ENCODE measurements at regions of chr10 and their contacts with region 1.

Region 1: DNA sequence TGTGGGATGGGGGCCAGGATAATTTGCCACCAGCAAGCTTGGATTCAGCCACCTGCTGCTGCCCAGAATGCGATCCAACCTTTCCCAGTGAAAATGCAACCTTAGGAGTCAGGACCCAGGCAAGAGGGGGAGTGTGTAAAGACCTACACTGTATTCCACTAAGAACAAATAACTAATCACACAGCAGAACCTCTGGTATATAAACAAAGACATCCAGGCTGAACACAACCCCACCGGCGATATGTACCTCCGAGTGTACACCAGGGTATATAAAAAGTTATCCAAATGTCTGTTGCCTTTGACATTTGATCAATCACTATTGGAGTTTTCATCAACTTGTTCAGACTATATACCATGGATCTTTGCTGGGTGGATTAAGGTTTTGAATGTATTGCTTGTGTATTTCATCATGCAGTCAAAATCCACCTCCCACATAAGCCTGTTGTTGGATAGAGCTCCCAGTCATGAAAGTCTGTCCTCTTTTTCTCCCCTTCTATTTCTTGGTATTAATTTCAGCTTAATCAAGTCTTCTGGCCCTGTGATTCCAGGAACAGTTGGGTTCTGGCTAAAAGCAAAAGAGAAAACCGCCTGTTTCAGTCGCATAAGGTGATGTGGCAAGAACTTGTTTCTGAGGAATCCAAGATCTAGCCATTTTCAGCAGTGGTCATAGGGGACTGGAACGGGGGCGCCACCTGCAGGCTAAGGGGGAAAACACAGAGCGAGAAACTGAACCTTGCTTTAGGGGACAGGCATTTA is 290.7 kb downstream of the CCDC3 start:
- DNase-seq: peak; percentile 74
- H3K4me3 Mint-ChIP-seq: no peak overlapping the region
- H3K27ac Mint-ChIP-seq: peak overlapping the region; percentile 76
- H3K4me1 Mint-ChIP-seq: peaks cover 65% of the 10 kb centered on the region
- H3K27me3 Mint-ChIP-seq: no peaks in the 10 kb centered on the region

Region 2: GRCh38 chr10:11993834-11994468 is 716.8 kb before region 1 on chr10:
- intact Hi-C with region 1: no loop called
- DNase-seq: no peak
- H3K4me3 Mint-ChIP-seq: no peak overlapping the region
- H3K27ac Mint-ChIP-seq: no peak overlapping the region
- H3K4me1 Mint-ChIP-seq: peaks cover 9% of the 10 kb centered on the region
- H3K27me3 Mint-ChIP-seq: no peaks in the 10 kb centered on the region

Region 3: DNA sequence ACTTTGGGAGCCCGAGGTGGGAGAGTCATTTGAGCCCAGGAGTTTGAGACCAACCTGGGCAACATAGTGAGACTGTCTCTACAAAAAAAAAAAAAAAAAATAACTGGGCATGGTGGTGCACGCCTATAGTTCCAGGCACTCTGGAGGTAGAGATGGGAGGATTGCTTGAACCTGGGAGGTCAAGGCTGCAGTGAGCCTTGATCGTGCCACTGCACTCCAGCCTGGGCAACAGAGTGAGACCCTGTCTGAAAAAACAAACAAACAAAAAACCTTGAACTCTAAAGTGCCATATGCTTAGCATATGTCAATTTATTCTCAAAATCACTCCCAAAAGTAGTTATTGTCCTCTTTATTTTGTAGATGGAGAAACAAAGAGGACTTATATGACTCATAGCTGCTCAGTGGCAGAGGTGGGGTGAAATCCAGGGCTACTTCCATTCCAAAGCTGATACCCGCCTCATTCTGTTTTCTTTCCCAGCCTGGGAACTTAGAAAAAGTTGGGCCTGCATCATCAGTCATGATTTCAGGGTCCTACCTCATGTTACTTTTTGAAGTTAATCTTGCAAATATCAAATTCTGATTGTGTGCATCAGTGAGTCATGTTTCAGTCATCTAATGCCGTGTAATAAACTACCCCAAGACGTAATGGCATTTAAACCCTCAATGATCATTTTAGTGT is 628.8 kb before region 1 on chr10:
- intact Hi-C with region 1: no loop called
- DNase-seq: no peak
- H3K4me3 Mint-ChIP-seq: no peak overlapping the region
- H3K27ac Mint-ChIP-seq: no peak overlapping the region
- H3K4me1 Mint-ChIP-seq: peaks cover 5% of the 10 kb centered on the region
- H3K27me3 Mint-ChIP-seq: no peaks in the 10 kb centered on the region

Region 4: DNA sequence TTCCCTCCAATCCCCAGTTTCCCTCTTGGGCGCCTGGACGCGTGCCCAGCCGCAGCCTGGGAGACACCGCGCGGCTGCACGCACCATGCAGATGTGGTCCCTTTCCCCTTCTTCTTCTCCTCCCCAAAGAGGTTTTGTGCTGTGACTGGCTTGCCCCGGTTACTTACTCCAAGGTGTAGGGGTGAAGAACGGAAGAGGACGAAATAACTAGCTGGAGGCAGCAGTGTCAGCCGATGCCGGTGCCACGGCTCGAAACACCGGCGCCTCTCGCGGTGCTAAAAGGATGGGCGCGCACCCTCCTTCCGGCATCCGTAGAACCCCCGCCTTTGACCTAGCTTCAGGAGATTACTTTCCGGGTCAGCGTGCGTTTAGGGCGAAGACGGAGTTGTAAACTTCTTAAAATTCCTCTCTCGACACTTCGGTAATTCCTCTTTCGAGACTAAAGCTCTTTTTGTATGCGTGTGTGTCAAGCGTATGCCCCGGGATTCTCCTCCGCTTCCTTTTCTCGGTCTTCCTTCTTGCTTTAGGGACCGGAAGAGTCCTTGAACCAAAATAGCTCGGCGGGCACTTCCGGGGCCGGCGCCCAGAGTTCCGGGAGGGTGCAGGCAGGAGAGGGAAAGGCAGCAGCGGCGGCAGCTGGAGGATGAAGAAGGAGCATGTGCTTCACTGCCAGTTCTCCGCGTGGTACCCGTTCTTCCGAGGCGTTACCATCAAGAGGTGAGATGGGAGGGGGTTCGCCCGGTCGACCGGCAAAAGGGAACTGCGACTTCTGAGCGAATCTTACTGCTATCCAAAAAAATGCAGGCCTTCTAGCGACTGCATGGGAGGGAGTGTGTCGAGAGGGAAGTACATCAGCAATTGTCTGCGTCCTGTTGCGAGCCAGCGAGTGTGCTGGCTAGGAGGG is 514.9 kb before region 1 on chr10 and contains the starts of genes CDC123 and NUDT5:
- intact Hi-C with region 1: loop called (anchors 1 kb)
- DNase-seq: peak; percentile 83
- H3K4me3 Mint-ChIP-seq: peak within 1 kb of the TSS; percentile 90
- H3K27ac Mint-ChIP-seq: peak within 1 kb of the TSS; percentile 97
- H3K4me1 Mint-ChIP-seq: peaks cover 60% of the 10 kb centered on the region
- H3K27me3 Mint-ChIP-seq: no peaks in the 10 kb centered on the region
- total RNA-seq, gene CDC123: 190 and 191 TPM in 2 replicates
- total RNA-seq, gene NUDT5: 121 and 131 TPM in 2 replicates

Region 5: DNA sequence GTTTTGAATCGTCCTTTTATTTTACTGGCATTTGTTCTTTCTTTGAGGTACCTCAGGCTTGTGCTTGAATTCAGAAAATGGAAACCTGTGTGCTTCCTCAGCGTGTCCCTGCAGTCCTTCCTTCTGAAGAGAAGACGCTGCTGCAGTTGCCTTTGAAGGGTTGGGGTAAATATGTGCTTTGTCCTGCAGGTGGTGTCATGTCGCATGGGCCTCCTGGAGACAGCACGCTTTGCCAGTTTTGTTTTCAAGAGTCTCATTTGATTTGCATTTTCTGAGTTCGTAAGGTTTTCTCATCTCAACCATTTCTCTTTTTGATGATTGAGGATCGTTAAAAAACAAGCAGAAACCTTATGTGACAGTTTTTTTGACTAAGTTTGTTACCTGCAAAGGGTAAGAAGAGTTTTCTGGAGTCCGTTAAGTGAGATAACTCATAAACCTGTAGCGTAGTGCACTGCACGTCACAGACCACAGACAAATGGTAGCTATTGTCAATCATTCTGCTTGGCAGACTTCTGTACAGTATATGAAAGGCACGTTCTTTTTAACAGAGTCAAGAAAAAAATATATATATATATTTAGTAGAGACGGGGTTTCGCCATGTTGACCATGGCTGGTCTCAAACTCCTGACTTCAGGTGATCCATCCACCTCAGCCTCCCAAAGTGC is 457.8 kb before region 1 on chr10:
- intact Hi-C with region 1: loop called (anchors 1 kb)
- DNase-seq: no peak
- H3K4me3 Mint-ChIP-seq: no peak overlapping the region
- H3K27ac Mint-ChIP-seq: no peak overlapping the region
- H3K4me1 Mint-ChIP-seq: no peaks in the 10 kb centered on the region
- H3K27me3 Mint-ChIP-seq: no peaks in the 10 kb centered on the region

Region 6: DNA sequence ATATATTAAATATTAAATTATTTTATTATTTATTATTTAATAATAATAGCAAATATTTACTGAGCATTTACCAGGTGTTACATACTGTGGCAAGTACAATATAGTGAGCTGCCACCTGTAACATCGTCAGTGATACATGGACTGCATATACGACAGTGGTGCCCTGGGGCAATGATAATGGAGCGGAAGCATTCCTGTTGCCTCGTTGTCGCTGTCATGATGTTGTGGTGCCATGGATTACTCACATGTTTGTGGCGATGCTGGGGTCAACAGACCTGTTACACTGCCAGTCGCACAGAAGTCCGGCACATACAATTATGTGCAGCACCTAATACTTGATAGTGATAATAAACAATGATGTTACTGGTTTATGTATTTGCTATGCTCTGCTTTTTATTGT is 340.8 kb before region 1 on chr10:
- intact Hi-C with region 1: loop called (anchors 2 kb)
- DNase-seq: no peak
- H3K4me3 Mint-ChIP-seq: no peak overlapping the region
- H3K27ac Mint-ChIP-seq: no peak overlapping the region
- H3K4me1 Mint-ChIP-seq: peaks cover 18% of the 10 kb centered on the region
- H3K27me3 Mint-ChIP-seq: no peaks in the 10 kb centered on the region

Region 7: GRCh38 chr10:12644380-12645144 is 66.2 kb before region 1 on chr10:
- intact Hi-C with region 1: loop called (anchors 2 kb)
- DNase-seq: no peak
- H3K4me3 Mint-ChIP-seq: peak overlapping the region; percentile 38
- H3K27ac Mint-ChIP-seq: peak overlapping the region; percentile 85
- H3K4me1 Mint-ChIP-seq: peaks cover 27% of the 10 kb centered on the region
- H3K27me3 Mint-ChIP-seq: peaks cover 2% of the 10 kb centered on the region

Region 8: GRCh38 chr10:13074561-13075451 is 364.0 kb after region 1 on chr10:
- intact Hi-C with region 1: loop called (anchors 5 kb)
- DNase-seq: peak; percentile 29
- H3K4me3 Mint-ChIP-seq: no peak overlapping the region
- H3K27ac Mint-ChIP-seq: no peak overlapping the region
- H3K4me1 Mint-ChIP-seq: peaks cover 8% of the 10 kb centered on the region
- H3K27me3 Mint-ChIP-seq: peaks cover 24% of the 10 kb centered on the region